Activated B cell treated with CpG ODN at 0.5 μM for 24 hours (primary cell): ENCODE measurements at regions of chr1 and their contacts with region 1.

Region 1: DNA sequence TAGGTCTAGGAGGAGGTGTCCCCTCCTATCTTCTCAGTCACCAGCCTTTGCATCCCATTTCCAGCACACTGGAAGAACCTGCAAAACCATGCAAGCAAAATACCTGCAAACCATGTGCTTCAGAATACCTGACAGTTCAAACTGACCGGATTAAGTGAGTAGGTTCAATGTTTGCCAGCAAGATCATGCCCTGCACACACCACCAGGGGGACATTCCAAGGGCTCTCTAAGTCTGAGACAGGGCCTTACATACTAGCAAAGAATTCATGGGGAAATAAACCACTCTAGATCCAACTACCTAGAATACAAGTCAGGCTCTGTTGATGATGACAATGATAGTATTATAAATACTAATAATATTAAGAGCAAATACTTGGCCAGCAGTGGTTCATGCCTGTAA is 27.6 kb downstream of the INPP5B start:
- DNase-seq: no peak
- ATAC-seq: no peak
- H3K4me3 Mint-ChIP-seq: no peak overlapping the region
- H3K27ac Mint-ChIP-seq: no peak overlapping the region
- H3K4me1 Mint-ChIP-seq: peaks cover 54% of the 10 kb centered on the region
- H3K27me3 Mint-ChIP-seq: no peaks in the 10 kb centered on the region
- CTCF ChIP-seq: no peak

Region 2: GRCh38 chr1:37186246-37186756 is 733.0 kb before region 1 on chr1:
- CTCF ChIA-PET with region 1: no interaction called
- POLR2A ChIA-PET with region 1: no interaction called
- intact Hi-C with region 1: no loop called
- DNase-seq: no peak
- ATAC-seq: no peak
- H3K4me3 Mint-ChIP-seq: no peak overlapping the region
- H3K27ac Mint-ChIP-seq: no peak overlapping the region
- H3K4me1 Mint-ChIP-seq: no peaks in the 10 kb centered on the region
- H3K27me3 Mint-ChIP-seq: peaks cover 28% of the 10 kb centered on the region
- CTCF ChIP-seq: no peak

Region 3: GRCh38 chr1:37901191-37901892 is 17.9 kb before region 1 on chr1:
- CTCF ChIA-PET with region 1: no interaction called
- POLR2A ChIA-PET with region 1: interaction called, 16 read pairs
- intact Hi-C with region 1: loop called (anchors 2 kb)
- DNase-seq: peak; percentile 23
- ATAC-seq: peak; percentile 76
- H3K4me3 Mint-ChIP-seq: peak overlapping the region; percentile 68
- H3K27ac Mint-ChIP-seq: peak overlapping the region; percentile 91
- H3K4me1 Mint-ChIP-seq: peaks cover 22% of the 10 kb centered on the region
- H3K27me3 Mint-ChIP-seq: no peaks in the 10 kb centered on the region
- CTCF ChIP-seq: no peak

Region 4: DNA sequence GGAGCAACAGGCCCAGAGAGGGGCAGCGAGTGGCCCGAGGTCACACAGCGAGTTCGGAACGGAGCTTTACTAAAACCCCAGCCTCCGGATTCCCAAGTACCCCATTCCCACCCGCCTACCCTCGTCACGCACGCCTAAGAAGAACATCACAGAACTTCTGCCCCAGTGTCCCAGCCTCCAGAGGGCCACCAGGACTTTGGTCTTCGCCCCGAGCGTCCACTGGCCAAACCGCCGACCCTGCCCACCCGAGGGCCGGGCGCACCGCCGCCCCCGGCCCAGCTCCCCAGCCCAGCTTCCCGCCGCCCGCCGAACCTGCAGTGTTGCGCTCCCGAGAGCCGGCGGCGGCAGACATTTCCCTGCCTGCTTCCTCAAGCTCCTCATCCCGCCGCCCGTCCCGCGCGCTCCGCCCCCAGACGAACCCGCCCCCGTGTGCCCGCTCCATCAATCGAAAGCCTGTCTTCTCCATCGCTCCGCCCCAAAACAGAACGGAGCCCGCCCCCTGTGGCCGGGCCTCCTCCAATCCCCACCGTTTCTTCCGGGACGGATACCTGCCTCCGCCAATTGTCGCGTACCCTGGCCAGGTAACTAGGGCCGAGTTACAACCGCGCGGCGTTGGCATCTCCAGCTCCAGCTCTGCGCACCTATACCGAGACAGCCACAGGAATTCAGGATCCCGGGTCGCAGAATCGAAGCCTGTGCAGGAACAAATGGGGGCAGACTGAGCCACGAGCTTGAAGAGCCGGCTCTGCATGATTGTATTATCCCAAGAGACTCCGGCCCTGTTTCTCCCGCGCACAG is 12.3 kb after region 1 on chr1:
- CTCF ChIA-PET with region 1: interaction called, 14 read pairs
- POLR2A ChIA-PET with region 1: interaction called, 32 read pairs
- intact Hi-C with region 1: loop called (anchors 1 kb)
- DNase-seq: peak; percentile 94
- ATAC-seq: peak; percentile 99
- H3K4me3 Mint-ChIP-seq: peak overlapping the region; percentile 99
- H3K27ac Mint-ChIP-seq: peak overlapping the region; percentile 87
- H3K4me1 Mint-ChIP-seq: peaks cover 48% of the 10 kb centered on the region
- H3K27me3 Mint-ChIP-seq: no peaks in the 10 kb centered on the region
- CTCF ChIP-seq: no peak

Region 5: GRCh38 chr1:37946703-37947360 is 27.6 kb after region 1 on chr1 and contains the start of gene INPP5B:
- CTCF ChIA-PET with region 1: no interaction called
- POLR2A ChIA-PET with region 1: interaction called, 12 read pairs
- intact Hi-C with region 1: loop called (anchors 1 kb)
- DNase-seq: peak; percentile 74
- ATAC-seq: peak; percentile 100
- H3K4me3 Mint-ChIP-seq: peak within 1 kb of the TSS; percentile 100
- H3K27ac Mint-ChIP-seq: peak within 1 kb of the TSS; percentile 97
- H3K4me1 Mint-ChIP-seq: peaks cover 23% of the 10 kb centered on the region
- H3K27me3 Mint-ChIP-seq: no peaks in the 10 kb centered on the region
- CTCF ChIP-seq: no peak
- total RNA-seq, gene INPP5B: 63.4 and 70.3 TPM in 2 replicates